PC-9 (cell line): ENCODE measurements at regions of chr6 and their contacts with region 1.

Region 1: GRCh38 chr6:27753668-27754407 is 158.4 kb downstream of the OR2B2 start:
- DNase-seq: peak; percentile 66 to 81
- H3K4me3 ChIP-seq: peak overlapping the region; percentile 73
- H3K27ac ChIP-seq: no peak overlapping the region
- H3K4me1 ChIP-seq: peaks cover 8% of the 10 kb centered on the region; the same call in 1 of the 2 replicates
- H3K27me3 ChIP-seq: no peaks in the 10 kb centered on the region
- CTCF ChIP-seq: no peak

Region 2: GRCh38 chr6:27188885-27189418 is 564.9 kb before region 1 on chr6:
- CTCF ChIA-PET with region 1: interaction called, 6 read pairs
- POLR2A ChIA-PET with region 1: no interaction called
- intact Hi-C with region 1: loop called (anchors 1 kb)
- DNase-seq: peak; percentile 55 to 66
- H3K4me3 ChIP-seq: peak overlapping the region; percentile 87
- H3K27ac ChIP-seq: peak overlapping the region; percentile 57; the same call in 1 of the 2 replicates
- H3K4me1 ChIP-seq: peaks cover 12% of the 10 kb centered on the region
- H3K27me3 ChIP-seq: no peaks in the 10 kb centered on the region
- CTCF ChIP-seq: peak; percentile 88

Region 3: DNA sequence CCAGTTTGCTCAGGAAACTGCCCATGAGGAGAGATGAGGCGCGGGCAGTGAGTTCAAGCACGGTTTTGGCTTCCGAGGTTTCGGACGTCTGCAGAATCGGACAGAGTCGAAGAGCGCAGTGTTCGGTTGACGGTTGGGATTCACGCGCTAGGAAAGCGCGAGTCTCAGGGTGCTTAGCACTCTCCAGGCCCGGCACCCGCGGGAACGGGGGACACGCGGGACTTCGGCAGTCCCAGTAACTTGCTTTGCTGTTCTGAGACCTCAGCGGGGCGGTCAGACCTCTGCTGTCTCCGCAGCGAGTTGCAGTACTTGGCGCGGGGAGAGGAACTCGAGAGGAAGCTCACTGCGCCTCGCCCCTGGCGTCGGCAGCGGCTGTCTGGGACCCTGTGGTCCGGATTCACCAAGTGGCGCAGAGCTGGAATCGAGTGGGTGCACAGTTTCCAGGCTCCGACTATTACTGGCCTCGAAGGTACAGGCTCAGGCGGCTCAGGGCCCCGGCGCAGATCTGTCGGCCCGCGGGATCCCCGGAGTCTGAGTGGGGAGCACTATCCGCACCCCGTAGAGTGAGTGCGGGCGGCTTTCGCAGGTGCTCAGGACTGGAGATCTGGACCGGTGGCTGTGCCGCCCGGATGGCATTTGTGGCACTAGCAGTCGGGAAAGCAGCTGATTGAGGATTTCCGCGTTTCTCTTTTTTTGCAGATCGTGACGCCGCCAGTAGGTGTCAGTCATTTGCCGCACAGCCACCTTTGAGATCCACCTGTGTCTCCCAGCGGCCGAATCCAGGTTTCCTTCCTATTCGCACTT is 441.5 kb before region 1 on chr6 and contains the start of gene POM121L2:
- CTCF ChIA-PET with region 1: interaction called, 10 read pairs
- POLR2A ChIA-PET with region 1: no interaction called
- intact Hi-C with region 1: loop called (anchors 1 kb)
- DNase-seq: peak; percentile 64 to 87
- H3K4me3 ChIP-seq: peak within 1 kb of the TSS; percentile 68
- H3K27ac ChIP-seq: no peak within 1 kb of the TSS
- H3K4me1 ChIP-seq: no peaks in the 10 kb centered on the region
- H3K27me3 ChIP-seq: 0 out of 2 replicates have a peak, but pooled peaks cover 3% of the 10 kb centered on the region
- CTCF ChIP-seq: peak; percentile 79
- total RNA-seq, gene POM121L2: 0.26 TPM in 1 of 2 replicates, not detected in the other

Region 4: GRCh38 chr6:27394073-27394472 is 359.8 kb before region 1 on chr6:
- CTCF ChIA-PET with region 1: no interaction called
- POLR2A ChIA-PET with region 1: no interaction called
- intact Hi-C with region 1: no loop called
- DNase-seq: no peak
- H3K4me3 ChIP-seq: no peak overlapping the region
- H3K27ac ChIP-seq: no peak overlapping the region
- H3K4me1 ChIP-seq: no peaks in the 10 kb centered on the region
- H3K27me3 ChIP-seq: no peaks in the 10 kb centered on the region
- CTCF ChIP-seq: no peak

Region 5: DNA sequence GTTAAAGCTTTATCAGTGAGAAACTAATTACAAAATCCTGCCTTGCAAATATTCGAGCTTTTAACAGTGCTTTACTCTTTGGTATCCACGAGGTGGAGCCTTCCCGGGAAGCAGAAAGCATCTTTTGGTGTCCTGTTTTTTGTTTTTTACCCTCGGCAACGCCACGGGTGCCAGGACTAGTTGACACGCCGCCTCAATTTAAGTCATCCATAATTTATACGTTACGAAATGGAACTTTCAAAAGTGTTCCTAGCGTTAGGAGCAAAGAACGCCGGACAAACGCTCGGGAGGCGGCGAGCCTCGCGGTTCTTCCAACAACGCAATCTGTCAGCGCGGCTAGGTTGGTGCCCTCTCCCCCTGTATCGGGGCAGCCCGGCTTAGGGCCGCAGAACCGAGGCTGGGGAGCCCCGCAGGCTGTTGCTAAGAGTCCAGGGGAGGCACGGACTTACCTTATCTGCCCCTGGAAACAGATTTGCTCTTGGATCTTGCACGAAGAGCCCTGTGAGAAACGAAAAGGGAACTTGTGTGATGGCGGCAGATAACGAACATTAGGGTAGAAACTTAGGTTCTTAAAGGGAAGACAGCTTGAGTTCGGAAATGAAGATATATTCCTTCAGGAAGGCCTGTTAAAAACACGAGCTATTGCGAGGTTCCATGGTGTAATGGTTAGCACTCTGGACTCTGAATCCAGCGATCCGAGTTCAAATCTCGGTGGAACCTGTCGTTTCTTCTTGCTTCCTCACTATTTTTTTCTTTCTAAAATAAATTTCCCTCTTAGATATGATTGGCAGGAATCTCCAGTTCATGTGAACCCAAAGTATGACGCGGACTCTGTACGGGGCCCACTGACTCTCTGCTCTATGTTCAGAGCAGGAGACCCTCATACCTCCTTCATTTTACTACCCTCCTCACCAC is 234.7 kb before region 1 on chr6:
- CTCF ChIA-PET with region 1: interaction called, 8 read pairs
- POLR2A ChIA-PET with region 1: no interaction called
- intact Hi-C with region 1: loop called (anchors 1 kb)
- DNase-seq: peak; percentile 72 to 85
- H3K4me3 ChIP-seq: peak overlapping the region; percentile 87
- H3K27ac ChIP-seq: peak overlapping the region; percentile 50
- H3K4me1 ChIP-seq: peaks cover 19% of the 10 kb centered on the region
- H3K27me3 ChIP-seq: no peaks in the 10 kb centered on the region
- CTCF ChIP-seq: peak; percentile 86

Region 6: DNA sequence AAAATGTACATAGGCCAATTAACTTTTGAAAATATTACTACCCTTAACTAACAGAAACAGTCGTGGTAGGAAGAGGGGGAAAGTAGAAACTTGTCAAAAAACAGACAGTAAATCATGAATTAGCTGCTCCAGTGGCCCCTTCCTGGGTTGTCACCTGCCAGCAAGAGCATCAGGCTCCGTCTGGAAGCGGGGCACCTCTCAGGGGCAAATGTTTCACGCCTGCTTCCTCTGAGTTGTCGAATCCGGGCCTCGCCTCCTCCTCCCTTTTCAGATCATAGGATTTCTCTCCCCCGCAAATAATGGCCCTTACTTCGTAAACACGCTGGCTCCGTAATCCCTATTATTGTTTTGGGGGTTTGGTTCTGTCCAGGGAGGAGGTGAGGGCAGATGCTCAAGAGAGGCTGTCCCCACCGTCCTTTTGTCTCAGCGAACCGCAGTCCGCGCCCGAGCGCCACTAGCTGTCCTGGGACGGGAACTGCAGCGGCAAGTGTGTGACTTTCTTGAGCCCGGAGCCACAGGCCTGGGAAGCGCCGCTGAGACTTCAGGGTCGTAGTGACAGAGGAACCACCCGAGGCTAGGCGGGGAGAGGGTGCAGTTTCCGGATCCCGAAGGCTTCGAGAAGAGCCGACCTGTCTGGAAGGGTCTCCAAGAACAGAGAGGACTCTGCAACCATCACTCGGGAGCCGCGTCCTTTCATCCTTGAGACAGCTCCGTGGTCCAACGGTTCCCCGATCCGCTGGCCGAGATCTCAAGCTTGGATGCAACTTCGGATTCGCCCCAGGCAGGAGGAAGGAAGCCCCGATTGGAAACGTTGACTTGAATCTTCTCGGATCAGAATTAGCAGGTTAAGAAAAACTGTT is 66.5 kb before region 1 on chr6:
- CTCF ChIA-PET with region 1: interaction called, 5 read pairs
- POLR2A ChIA-PET with region 1: no interaction called
- intact Hi-C with region 1: loop called (anchors 1 kb)
- DNase-seq: peak; percentile 69 to 87
- H3K4me3 ChIP-seq: peak overlapping the region; percentile 61
- H3K27ac ChIP-seq: peak overlapping the region; percentile 6; the same call in 1 of the 2 replicates
- H3K4me1 ChIP-seq: peaks cover 6% of the 10 kb centered on the region; the same call in 1 of the 2 replicates
- H3K27me3 ChIP-seq: no peaks in the 10 kb centered on the region
- CTCF ChIP-seq: peak; percentile 73; the same call in 1 of the 2 replicates